Stomach (tissue), 19 donors: ENCODE measurements at regions of chr16 and their contacts with region 1.

Region 1: DNA sequence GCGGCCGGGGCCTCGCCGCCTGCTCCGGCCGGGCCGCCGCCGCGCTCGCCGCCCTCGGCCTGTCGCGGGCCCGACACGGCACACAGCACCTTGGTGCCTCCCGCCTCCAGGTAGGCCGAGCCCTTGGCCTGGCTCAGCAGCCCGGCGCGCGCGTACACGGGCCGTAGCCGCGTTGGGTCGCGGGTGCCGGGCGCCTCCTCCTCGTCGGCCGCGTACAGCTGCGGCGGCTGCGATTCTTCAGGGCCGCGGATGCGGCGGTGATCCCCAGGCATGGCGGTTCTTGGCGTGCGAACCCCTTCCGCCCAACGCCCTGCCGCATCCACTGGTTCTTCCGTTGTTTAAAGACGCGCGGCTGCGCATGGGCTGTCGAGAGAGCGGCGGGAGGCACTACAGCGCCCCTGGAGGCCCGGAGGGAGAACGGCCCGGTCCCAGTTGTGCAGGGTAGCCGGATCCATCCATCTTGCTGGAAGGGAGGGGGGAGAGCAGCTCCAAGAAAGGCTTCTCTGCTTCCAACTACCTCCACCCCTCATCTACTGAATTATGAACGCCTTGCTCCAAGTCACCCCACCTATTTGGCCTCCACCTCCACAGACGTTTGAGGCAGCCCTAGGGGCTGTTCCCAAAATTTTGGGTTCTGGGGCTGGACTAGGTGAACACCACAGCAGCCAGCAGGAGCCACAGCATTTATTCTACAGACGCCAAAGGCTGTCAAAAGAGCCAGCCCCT is at the start of gene EXOSC6:
- DNase-seq: peak; percentile 92 to 98
- H3K4me3 ChIP-seq: peak within 1 kb of the TSS; percentile 66 to 82 (median 77)
- H3K27ac ChIP-seq: peak within 1 kb of the TSS; percentile 85 to 96 (median 90)
- H3K4me1 ChIP-seq: peaks cover 14 to 40% (median 20%) of the 10 kb centered on the region in 4 donors
- H3K27me3 ChIP-seq: no peaks in the 10 kb centered on the region
- CTCF ChIP-seq: peak in 5 of 7 experiments; percentile 80 to 92 (median 91)
- EP300 ChIP-seq: no peak
- POLR2A ChIP-seq: no peak
- total RNA-seq, gene EXOSC6: 20.1 to 45.2 (median 30.3) TPM

Region 2: GRCh38 chr16:70158261-70158939 is 93.4 kb before region 1 on chr16:
- intact Hi-C with region 1: loop called (anchors 10 kb)
- DNase-seq: peak in 1 of 2 donors; percentile 17
- H3K4me3 ChIP-seq: no peak overlapping the region
- H3K27ac ChIP-seq: no peak overlapping the region
- H3K4me1 ChIP-seq: no peaks in the 10 kb centered on the region
- H3K27me3 ChIP-seq: no peaks in the 10 kb centered on the region
- CTCF ChIP-seq: no peak
- EP300 ChIP-seq: no peak
- POLR2A ChIP-seq: no peak

Region 3: DNA sequence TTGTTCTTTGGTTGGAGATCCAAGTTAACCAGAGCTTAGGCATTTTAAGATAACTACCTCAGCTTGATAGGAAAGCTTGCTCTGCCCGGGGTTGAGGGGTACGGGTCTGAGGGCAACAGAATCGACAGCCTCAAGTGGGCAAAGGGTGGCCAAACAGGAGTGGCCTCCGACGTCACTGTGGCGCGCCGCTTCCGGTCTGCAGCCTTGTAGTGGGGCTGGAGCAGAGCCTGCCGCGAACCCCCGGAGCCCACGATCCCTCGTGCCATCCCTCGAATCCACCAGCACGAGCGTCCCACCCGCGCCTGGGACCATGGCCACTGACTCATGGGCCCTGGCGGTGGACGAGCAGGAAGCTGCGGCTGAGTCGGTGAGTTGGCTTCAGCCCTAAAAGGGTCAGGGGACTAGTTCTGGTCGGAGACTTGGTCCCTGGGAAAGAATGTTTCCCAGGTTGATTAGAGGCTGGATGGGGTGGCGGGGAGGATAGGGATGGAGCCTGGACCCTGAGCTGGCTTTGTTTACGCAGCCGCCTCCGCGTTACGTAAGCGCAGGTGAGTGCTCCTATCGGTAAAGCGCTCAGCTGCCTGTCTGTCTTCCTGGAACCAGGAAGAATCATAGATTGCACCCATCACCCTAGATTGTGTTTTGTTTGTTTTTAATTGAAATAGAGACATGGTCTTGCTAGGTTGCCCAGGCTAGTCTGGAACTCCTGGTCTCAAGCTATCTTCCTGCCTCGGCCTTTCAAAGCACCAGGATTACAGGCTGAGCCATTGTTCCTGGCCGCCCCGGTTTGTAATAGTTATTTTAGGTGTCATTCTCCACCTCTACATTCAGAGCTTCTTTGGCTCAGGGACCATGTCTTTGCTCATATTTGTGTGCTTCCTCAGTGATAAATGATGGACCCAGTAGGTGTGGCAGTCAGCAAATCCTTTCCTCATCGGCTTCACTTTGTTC is 47.5 kb after region 1 on chr16 and contains the start of gene DDX19B:
- intact Hi-C with region 1: no loop called
- DNase-seq: peak; percentile 83 to 96
- H3K4me3 ChIP-seq: peak within 1 kb of the TSS; percentile 66 to 96 (median 76)
- H3K27ac ChIP-seq: peak within 1 kb of the TSS; percentile 94 to 99 (median 97)
- H3K4me1 ChIP-seq: peaks cover 18 to 35% (median 20%) of the 10 kb centered on the region in 4 donors
- H3K27me3 ChIP-seq: no peaks in the 10 kb centered on the region
- CTCF ChIP-seq: peak in 1 of 7 experiments; percentile 6
- EP300 ChIP-seq: no peak
- POLR2A ChIP-seq: peak in 1 of 4 donors; percentile 50
- total RNA-seq, gene DDX19B: 9.8 to 34.3 (median 25.7) TPM